ENCODE measurements at regions of chr20 and their contacts with region 1.

Region 1: GRCh38 chr20:41003143-41003883 is 25.3 kb upstream of the TOP1 start:
- DNase-seq: peak; percentile 99
- H3K4me3 Mint-ChIP-seq: peak overlapping the region; percentile 79
- H3K27ac Mint-ChIP-seq: peak overlapping the region; percentile 99
- H3K4me1 Mint-ChIP-seq: peaks cover 38% of the 10 kb centered on the region
- H3K27me3 Mint-ChIP-seq: no peaks in the 10 kb centered on the region
- CTCF ChIP-seq: no peak

Region 2: GRCh38 chr20:40654876-40655275 is 348.4 kb before region 1 on chr20:
- CTCF ChIA-PET with region 1: no interaction called
- POLR2A ChIA-PET with region 1: no interaction called
- intact Hi-C with region 1: no loop called
- DNase-seq: peak; percentile 81
- H3K4me3 Mint-ChIP-seq: no peak overlapping the region
- H3K27ac Mint-ChIP-seq: peak overlapping the region; percentile 88
- H3K4me1 Mint-ChIP-seq: peaks cover 43% of the 10 kb centered on the region
- H3K27me3 Mint-ChIP-seq: no peaks in the 10 kb centered on the region
- CTCF ChIP-seq: no peak

Region 3: DNA sequence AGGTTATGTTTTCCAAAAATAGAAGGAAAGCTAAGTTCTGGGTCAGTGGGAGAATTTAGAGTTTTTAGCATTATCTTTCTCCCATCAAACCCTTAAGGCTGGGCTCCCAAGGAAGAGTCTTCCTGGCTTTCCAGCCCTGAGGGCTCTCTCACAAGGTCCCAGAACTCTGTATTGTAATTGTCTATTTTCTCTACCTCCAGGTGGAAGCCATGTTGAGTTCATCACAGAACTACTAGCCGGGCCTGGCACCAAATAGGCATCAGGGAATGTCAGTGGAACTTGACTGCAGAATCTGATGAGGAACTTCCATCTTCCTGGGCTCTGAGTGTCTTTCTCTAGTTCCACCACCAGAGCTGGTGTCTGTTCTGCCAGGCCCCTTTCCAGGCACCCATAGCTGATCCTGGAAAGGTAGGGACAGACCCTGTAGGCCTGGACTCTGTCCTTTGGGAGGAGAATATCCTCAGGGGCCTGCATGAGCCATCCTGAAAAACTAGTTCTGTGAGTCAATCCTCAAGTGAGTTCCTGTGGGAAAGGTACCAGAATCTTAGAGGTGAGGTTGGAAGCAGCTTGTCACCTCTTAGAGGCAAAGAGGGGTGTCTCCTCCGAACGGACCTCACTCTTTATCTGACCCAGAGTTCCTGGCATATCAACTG is 14.2 kb after region 1 on chr20:
- CTCF ChIA-PET with region 1: interaction called, 6 read pairs
- POLR2A ChIA-PET with region 1: interaction called, 21 read pairs
- intact Hi-C with region 1: no loop called
- DNase-seq: no peak
- H3K4me3 Mint-ChIP-seq: no peak overlapping the region
- H3K27ac Mint-ChIP-seq: no peak overlapping the region
- H3K4me1 Mint-ChIP-seq: peaks cover 18% of the 10 kb centered on the region
- H3K27me3 Mint-ChIP-seq: no peaks in the 10 kb centered on the region
- CTCF ChIP-seq: no peak

Region 4: GRCh38 chr20:41023544-41023943 is 20.2 kb after region 1 on chr20:
- CTCF ChIA-PET with region 1: interaction called, 6 read pairs
- POLR2A ChIA-PET with region 1: interaction called, 83 read pairs
- intact Hi-C with region 1: no loop called
- DNase-seq: no peak
- H3K4me3 Mint-ChIP-seq: no peak overlapping the region
- H3K27ac Mint-ChIP-seq: no peak overlapping the region
- H3K4me1 Mint-ChIP-seq: peaks cover 13% of the 10 kb centered on the region
- H3K27me3 Mint-ChIP-seq: no peaks in the 10 kb centered on the region
- CTCF ChIP-seq: no peak

Region 5: GRCh38 chr20:41028348-41029148 is 25.2 kb after region 1 on chr20 and contains the start of gene TOP1:
- CTCF ChIA-PET with region 1: interaction called, 6 read pairs
- POLR2A ChIA-PET with region 1: interaction called, 83 read pairs
- intact Hi-C with region 1: loop called (anchors 1 kb)
- DNase-seq: peak; percentile 99
- H3K4me3 Mint-ChIP-seq: peak within 1 kb of the TSS; percentile 94
- H3K27ac Mint-ChIP-seq: peak within 1 kb of the TSS; percentile 100
- H3K4me1 Mint-ChIP-seq: peaks cover 41% of the 10 kb centered on the region
- H3K27me3 Mint-ChIP-seq: no peaks in the 10 kb centered on the region
- CTCF ChIP-seq: no peak
- total RNA-seq, gene TOP1: 141 and 174 TPM in 2 replicates

Region 6: DNA sequence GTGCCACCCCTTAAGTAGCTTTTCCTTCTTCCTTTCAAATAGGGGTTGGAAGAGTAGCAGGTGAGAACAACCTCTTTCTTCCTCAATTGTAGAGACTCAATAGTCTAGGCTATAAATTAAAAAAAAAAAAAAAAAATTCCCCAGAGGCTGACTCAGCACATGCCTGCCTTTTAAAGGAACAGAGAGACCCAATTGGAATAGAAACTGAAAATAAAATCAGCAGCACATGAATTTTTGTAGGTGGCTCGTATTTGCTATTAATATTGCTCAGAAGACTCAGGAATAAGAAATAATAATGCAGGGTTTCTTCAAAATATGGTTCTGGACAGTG is 44.6 kb after region 1 on chr20:
- CTCF ChIA-PET with region 1: interaction called, 4 read pairs
- POLR2A ChIA-PET with region 1: interaction called, 11 read pairs
- intact Hi-C with region 1: no loop called
- DNase-seq: peak; percentile 39
- H3K4me3 Mint-ChIP-seq: peak overlapping the region; percentile 73
- H3K27ac Mint-ChIP-seq: peak overlapping the region; percentile 5
- H3K4me1 Mint-ChIP-seq: peaks cover 66% of the 10 kb centered on the region
- H3K27me3 Mint-ChIP-seq: no peaks in the 10 kb centered on the region
- CTCF ChIP-seq: no peak

Region 7: DNA sequence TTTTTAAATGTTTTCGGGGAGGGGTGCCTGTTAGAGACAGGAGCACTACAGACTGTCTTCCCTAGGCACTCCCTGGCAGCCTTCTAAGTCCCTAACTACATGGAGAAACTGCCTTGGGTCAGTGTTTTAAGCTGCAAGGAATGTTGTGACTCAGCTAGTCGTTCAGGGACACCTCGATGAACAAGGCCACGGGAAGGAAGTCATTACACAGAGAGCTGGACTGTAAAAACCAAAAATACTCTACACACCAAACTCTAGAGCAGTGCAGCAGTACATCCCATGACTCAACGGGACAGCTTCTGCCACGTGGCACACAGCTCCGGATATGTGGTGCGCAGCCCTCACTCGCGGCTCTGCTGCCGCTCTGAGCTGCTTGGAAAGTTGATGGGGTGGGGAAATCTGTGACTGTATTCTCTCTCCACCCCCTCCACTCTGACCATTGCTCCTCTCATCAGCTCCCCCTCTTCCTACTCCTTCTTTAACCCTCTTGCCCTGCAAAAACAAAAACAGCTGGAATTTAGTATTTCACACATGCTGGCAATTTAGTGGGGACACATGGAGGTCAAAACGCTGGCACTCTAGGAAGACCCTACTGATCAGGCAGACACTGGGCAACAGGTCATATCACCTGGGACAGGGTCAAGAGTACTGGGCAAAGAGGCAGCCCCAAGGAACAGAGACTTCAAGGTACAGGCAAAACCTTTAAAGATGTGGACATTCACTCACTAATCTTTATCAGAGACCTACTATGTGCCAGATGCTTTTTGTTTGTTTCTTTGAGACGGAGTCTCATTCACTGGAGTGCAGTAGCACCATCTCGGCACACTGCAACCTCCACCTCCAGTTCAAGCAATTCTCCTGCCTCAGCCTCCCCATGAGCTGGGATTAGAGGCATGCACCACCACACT is 326.4 kb after region 1 on chr20:
- CTCF ChIA-PET with region 1: interaction called, 3 read pairs
- POLR2A ChIA-PET with region 1: no interaction called
- intact Hi-C with region 1: loop called (anchors 10 kb)
- DNase-seq: peak; percentile 92
- H3K4me3 Mint-ChIP-seq: peak overlapping the region; percentile 28
- H3K27ac Mint-ChIP-seq: peak overlapping the region; percentile 89
- H3K4me1 Mint-ChIP-seq: peaks cover 15% of the 10 kb centered on the region
- H3K27me3 Mint-ChIP-seq: no peaks in the 10 kb centered on the region
- CTCF ChIP-seq: no peak